Calu3 (cell line): ENCODE measurements at regions of chr1 and their contacts with region 1.

Region 1: DNA sequence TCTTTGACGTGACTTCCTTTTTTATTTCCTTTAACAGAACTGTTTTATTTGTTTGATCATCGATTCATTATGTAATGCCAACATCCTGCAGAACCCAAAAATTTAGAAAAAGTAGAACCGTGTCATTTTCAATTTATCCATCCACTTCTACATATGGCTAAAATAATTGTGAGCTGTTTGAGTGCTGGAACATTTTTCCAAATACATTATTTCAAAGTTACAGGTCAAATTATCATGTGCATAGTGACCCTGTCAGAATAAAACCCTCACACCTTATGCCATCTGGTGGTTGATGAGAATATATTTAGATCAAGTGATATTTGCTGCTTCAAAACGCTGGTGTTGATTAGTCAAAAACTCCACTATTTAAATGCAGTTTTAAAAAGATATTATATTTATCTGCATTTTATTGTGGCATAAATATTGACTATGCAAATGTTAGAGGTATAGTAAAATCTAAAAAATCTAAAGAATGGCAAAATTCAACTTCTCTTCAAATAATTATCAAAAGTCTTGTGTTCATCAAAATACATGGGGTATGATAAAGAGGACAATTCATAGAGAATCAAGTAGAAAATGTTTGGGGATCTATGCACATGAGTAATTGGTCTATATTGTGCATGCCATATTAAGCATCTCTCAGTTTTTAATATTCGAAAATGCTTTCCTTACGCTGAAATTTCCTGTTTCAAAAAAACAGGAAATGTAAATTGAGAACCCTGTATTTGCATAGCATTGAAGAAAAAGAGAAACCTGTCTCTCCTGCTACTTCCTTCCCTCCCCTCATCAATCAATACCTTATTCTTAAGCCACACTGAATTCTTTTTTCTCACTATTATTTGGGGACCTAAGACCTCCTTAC is 39.7 kb downstream of the UBE2U start:
- DNase-seq: no peak
- H3K4me3 Mint-ChIP-seq: peak overlapping the region; percentile 12
- H3K27ac Mint-ChIP-seq: peak overlapping the region; percentile 18
- H3K4me1 Mint-ChIP-seq: peaks cover 20% of the 10 kb centered on the region
- H3K27me3 Mint-ChIP-seq: no peaks in the 10 kb centered on the region
- CTCF ChIP-seq: peak; percentile 41

Region 2: DNA sequence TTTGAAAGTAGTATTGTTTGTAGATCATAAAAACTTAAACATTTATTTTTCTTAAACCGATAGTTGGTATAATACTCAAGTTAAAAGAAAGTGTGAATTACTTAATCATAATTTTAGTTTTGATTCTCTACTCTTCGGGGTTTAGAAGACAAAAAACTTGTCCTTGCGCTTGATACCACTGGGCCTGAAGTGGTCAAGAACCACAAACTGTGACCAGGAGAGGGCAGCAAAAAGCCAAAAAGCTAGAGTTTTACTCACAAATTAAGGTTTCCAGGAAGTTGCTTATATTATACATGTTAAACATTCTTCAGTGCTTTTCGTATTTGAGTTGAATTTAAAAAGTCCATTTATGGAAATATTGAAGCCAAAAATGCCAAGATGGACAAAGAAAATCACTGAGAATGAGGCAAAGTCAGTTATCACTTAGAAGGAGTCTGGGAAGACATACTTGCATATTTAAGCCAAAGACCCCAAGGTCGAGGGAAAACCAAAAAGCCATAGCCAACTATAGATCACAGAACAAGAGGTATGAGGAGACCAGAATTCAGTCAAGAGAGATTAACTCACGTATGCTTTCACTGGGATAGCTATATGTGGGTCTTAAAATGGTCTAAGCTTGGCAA is 685.6 kb before region 1 on chr1:
- CTCF ChIA-PET with region 1: interaction called, 3 read pairs
- intact Hi-C with region 1: loop called (anchors 1 kb)
- DNase-seq: peak; percentile 65
- H3K4me3 Mint-ChIP-seq: no peak overlapping the region
- H3K27ac Mint-ChIP-seq: peak overlapping the region; percentile 71
- H3K4me1 Mint-ChIP-seq: peaks cover 8% of the 10 kb centered on the region
- H3K27me3 Mint-ChIP-seq: no peaks in the 10 kb centered on the region
- CTCF ChIP-seq: peak; percentile 69

Region 3: GRCh38 chr1:63615768-63616420 is 627.2 kb before region 1 on chr1:
- CTCF ChIA-PET with region 1: interaction called, 3 read pairs
- intact Hi-C with region 1: loop called (anchors 1 kb)
- DNase-seq: peak; percentile 79
- H3K4me3 Mint-ChIP-seq: no peak overlapping the region
- H3K27ac Mint-ChIP-seq: no peak overlapping the region
- H3K4me1 Mint-ChIP-seq: peaks cover 49% of the 10 kb centered on the region
- H3K27me3 Mint-ChIP-seq: no peaks in the 10 kb centered on the region
- CTCF ChIP-seq: peak; percentile 87

Region 4: DNA sequence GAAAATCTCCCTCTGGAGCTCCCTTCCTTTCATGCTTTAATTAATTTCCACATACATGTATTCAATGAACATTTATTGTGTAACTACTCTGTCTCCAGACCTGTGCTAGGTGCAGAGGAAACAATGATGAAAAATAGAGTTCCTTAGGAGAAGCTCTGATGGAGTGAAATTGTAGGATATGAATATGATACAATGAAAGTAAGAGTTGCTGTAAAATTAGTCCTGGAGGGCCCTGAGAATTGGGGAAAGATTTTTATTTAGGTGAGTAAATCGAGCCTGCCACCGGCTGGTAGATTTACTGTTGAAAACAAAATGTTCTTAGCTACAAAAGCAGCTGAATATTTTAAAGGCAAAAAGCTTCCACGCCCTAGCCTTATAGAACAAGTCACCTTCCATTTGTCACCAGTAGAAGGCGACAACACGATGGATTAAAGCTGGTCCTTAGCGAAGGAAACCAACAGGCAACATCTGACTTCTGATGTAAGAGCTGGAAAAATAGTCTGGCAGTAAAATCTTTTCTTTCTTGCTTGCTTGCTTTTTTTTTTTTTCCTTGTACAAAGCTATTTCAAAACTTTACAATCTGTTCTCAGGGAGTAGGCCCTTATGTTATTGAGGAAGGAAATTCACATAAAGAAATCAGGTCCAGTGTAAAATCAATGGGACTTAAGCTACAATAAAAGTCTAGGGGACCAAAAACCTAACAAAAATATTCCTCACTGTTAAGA is 551.3 kb before region 1 on chr1:
- CTCF ChIA-PET with region 1: interaction called, 18 read pairs
- intact Hi-C with region 1: loop called (anchors 1 kb)
- DNase-seq: peak; percentile 70
- H3K4me3 Mint-ChIP-seq: no peak overlapping the region
- H3K27ac Mint-ChIP-seq: peak overlapping the region; percentile 53
- H3K4me1 Mint-ChIP-seq: peaks cover 49% of the 10 kb centered on the region
- H3K27me3 Mint-ChIP-seq: no peaks in the 10 kb centered on the region
- CTCF ChIP-seq: peak; percentile 67

Region 5: DNA sequence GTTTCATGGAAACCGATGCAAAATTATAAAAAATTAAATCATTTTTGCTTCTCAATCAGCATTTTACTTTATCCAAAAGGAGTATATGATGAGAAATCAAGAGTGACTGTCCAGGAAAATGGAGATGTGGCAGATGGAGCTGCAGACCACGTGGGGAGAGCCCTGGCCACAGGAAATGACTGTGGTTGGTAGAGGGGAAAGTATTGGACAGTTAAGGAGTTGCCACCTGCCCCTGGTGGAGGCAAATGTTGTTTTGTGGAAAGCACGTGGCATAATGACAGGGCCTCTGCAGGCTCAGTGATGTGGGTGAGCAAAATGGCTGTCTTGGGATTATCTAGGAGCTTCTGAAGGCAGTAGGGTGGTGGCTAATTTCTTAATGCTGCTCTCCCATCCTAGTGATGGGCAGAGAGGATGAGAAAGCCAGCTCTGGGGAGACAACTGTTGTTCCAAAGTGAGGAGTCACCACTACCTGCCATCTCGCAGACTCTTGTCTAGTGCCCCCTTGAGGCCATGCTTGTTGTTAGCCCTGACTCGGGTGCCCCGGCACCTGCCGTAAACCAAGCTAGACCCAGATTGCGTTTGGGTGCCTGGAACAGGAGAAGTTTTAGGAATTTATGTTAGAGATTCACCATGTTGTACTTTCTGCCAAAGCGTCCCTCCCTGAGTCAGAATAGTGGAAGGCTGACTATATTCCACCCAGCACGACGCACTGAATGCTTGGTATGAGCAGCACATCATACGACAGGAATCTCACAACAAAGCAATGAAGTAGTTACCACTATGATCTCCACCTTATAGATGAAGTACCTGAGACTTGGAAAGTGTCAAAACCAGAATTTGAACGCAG is 325.3 kb before region 1 on chr1:
- CTCF ChIA-PET with region 1: no interaction called
- intact Hi-C with region 1: loop called (anchors 5 kb)
- DNase-seq: peak; percentile 80
- H3K4me3 Mint-ChIP-seq: peak overlapping the region; percentile 57
- H3K27ac Mint-ChIP-seq: peak overlapping the region; percentile 83
- H3K4me1 Mint-ChIP-seq: peaks cover 93% of the 10 kb centered on the region
- H3K27me3 Mint-ChIP-seq: no peaks in the 10 kb centered on the region
- CTCF ChIP-seq: peak; percentile 78

Region 6: GRCh38 chr1:64006276-64007051 is 236.7 kb before region 1 on chr1:
- CTCF ChIA-PET with region 1: no interaction called
- intact Hi-C with region 1: no loop called
- DNase-seq: peak; percentile 51
- H3K4me3 Mint-ChIP-seq: peak overlapping the region; percentile 59
- H3K27ac Mint-ChIP-seq: peak overlapping the region; percentile 92
- H3K4me1 Mint-ChIP-seq: peaks cover 65% of the 10 kb centered on the region
- H3K27me3 Mint-ChIP-seq: no peaks in the 10 kb centered on the region
- CTCF ChIP-seq: no peak

Region 7: DNA sequence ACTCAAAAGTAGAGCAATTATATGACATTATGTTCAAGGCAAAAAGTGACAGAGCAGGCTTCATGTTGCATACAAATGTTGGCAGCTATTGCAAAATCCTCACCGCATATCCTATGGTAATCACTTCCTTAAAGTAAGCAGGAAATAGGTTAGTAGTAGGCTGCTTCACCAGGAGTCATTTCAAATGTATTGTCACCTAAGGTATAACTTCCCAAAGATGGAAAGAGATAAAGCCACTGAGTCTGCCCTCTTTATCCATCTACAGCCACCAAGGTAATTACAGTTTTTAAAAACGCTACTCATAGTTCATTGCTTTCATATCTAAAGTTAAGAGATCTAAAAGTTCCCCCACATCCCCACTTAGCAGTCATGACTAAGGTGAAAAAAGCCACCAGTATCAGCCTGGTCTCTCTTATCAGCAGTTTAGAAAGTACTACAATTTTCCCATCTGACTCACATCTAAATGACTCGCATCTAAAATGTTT is 71.3 kb before region 1 on chr1:
- CTCF ChIA-PET with region 1: interaction called, 3 read pairs
- intact Hi-C with region 1: loop called (anchors 5 kb)
- DNase-seq: peak; percentile 39
- H3K4me3 Mint-ChIP-seq: peak overlapping the region; percentile 22
- H3K27ac Mint-ChIP-seq: peak overlapping the region; percentile 58
- H3K4me1 Mint-ChIP-seq: peaks cover 57% of the 10 kb centered on the region
- H3K27me3 Mint-ChIP-seq: no peaks in the 10 kb centered on the region
- CTCF ChIP-seq: no peak

Region 8: DNA sequence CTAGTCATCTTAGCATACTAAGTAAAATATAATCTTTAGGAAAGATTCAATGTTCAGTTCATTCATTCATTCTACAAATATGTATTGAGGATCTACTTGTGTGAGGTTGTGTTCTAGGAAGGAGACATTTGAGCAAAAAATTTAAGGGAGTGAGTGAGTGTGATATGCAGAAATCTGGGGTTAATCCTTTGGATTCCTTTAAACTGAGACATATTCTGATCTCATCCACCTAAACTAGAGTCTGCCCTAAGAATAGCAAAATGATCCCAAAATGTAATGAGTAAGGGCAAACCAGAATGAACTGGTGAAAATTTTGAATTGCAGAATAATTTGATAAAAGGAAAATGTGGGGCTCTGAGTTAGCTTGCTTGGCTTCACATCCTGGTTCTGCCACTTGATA is 31.1 kb before region 1 on chr1:
- CTCF ChIA-PET with region 1: no interaction called
- intact Hi-C with region 1: no loop called
- DNase-seq: no peak
- H3K4me3 Mint-ChIP-seq: no peak overlapping the region
- H3K27ac Mint-ChIP-seq: no peak overlapping the region
- H3K4me1 Mint-ChIP-seq: no peaks in the 10 kb centered on the region
- H3K27me3 Mint-ChIP-seq: no peaks in the 10 kb centered on the region
- CTCF ChIP-seq: no peak